PC-9 (cell line): ENCODE measurements at regions of chr11 and their contacts with region 1.

Region 1: DNA sequence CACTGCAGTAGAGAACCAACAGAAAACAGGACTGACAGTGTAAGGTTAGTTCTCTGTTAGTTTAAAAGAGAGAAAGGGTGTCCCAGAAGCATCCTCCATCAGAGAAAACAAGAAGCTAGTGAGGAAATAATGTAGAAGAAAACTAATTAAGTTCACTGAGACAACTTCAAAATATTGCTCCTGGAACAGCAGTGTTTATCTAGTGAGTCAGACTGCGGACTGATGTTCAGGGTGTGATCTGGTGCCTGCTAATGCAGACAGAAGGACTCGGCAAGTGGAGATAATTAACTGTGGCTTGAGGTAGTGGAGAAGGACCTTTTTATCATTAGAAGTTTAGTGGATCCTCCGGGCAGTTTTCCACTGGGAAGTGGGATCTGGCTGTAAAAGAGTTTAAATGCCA is 55.4 kb downstream of the CDON start:
- DNase-seq: peak; percentile 2 to 54
- H3K4me3 ChIP-seq: no peak overlapping the region
- H3K27ac ChIP-seq: no peak overlapping the region
- H3K4me1 ChIP-seq: peaks cover 11% of the 10 kb centered on the region; the same call in 1 of the 2 replicates
- H3K27me3 ChIP-seq: no peaks in the 10 kb centered on the region
- CTCF ChIP-seq: no peak

Region 2: DNA sequence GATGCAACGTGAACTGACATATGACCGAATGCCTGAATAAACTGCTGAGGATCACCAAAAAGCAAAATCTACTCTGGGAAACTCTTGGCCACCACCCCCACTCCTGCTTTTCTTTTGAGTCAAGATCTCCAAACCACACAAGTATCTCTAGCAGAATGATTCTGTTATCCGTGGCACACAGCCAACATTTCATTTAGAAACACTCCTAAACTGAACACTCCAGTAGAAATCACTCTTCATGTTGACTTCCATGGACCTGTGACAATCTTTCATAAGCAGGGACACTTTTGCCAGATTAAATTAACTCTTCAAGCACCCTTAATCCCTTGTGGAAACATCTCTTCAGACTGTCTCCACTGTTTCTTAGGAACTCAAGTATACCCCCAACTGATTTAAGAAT is 17.0 kb before region 1 on chr11:
- CTCF ChIA-PET with region 1: no interaction called
- POLR2A ChIA-PET with region 1: no interaction called
- intact Hi-C with region 1: loop called (anchors 2 kb)
- DNase-seq: no peak
- H3K4me3 ChIP-seq: no peak overlapping the region
- H3K27ac ChIP-seq: no peak overlapping the region
- H3K4me1 ChIP-seq: no peaks in the 10 kb centered on the region
- H3K27me3 ChIP-seq: no peaks in the 10 kb centered on the region
- CTCF ChIP-seq: no peak